Left cardiac atrium (tissue), 4 donors: ENCODE measurements at regions of chr1 and their contacts with region 1.

Region 1: GRCh38 chr1:152869808-152870419 is 8.2 kb upstream of the SMCP start:
- DNase-seq: peak; percentile 58
- ATAC-seq: peak in 1 of 2 donors; percentile 69

Region 2: DNA sequence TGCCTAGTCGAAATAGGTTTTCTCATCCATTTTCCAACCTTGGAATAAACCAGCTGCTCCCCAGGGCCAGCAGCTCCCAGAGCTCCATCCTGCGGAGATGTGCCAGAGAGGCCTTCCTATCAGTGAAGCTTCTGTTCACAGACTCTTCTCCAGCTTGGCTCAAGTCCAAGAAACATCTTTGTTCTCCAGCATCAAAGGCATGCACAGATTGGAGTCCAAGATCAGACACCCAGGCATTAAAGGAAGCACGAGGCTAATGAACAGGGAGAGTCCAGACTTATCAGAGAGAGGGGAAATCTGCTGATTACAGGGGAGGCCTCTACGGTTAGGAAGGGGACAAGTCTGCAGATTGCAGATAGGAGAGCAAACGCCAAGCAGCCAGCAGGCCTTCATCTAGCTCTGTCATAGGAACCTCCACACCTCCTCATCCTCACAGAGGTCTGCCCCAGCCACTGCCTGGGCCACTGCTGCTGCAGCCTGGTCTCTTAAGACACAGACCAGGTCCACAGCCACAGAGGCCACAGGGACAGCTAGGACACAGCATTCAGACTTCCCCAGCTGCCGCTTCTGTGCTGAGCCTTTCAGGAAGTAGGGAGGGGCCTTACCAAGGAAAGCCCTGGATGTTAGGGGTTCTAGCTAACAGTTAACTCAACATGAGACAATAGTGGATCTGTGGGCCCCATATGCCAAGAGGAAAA is 350.8 kb after region 1 on chr1:
- intact Hi-C with region 1: loop called (anchors 5 to 10 kb)
- DNase-seq: no peak
- ATAC-seq: no peak

Region 3: DNA sequence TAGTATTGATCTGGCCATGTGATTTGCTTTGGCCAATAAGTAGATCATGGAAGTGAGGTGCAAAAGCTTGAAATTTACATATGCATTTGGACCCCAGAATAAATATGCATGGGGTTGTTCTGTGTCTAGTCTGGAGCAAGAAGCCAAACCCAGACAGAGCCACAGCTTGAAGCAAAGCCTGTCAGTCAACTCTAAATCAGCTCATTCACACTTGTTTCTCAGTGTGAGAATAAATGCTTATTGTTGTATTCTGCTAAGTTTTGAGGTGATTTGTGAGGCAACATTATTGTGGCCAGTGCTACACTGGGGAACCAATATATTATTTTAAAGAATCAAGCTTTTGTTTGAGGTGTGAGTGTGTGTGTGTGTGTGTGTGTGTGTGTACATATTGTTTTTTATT is 455.0 kb after region 1 on chr1:
- intact Hi-C with region 1: no loop called
- DNase-seq: no peak
- ATAC-seq: no peak